ENCODE measurements at regions of chr6 and their contacts with region 1.

Region 1: GRCh38 chr6:99568103-99568933 is at the start of gene CCNC:
- DNase-seq: peak; percentile 96
- ATAC-seq: peak; percentile 97
- H3K4me3 Mint-ChIP-seq: peak within 1 kb of the TSS; percentile 94
- H3K27ac Mint-ChIP-seq: peak within 1 kb of the TSS; percentile 99
- H3K4me1 Mint-ChIP-seq: peaks cover 16% of the 10 kb centered on the region
- H3K27me3 Mint-ChIP-seq: no peaks in the 10 kb centered on the region; the same call in 1 of the 2 replicates
- CTCF ChIP-seq: no peak
- total RNA-seq, gene CCNC: 82.2 to 93.1 TPM (median 86.8 TPM) in 3 replicates

Region 2: GRCh38 chr6:99425647-99426453 is 142.5 kb before region 1 on chr6:
- CTCF ChIA-PET with region 1: no interaction called
- POLR2A ChIA-PET with region 1: interaction called, 11 read pairs
- DNase-seq: peak; percentile 93
- ATAC-seq: peak; percentile 80
- H3K4me3 Mint-ChIP-seq: peak overlapping the region; percentile 97
- H3K27ac Mint-ChIP-seq: peak overlapping the region; percentile 100
- H3K4me1 Mint-ChIP-seq: peaks cover 72% of the 10 kb centered on the region
- H3K27me3 Mint-ChIP-seq: no peaks in the 10 kb centered on the region; the same call in 1 of the 2 replicates
- CTCF ChIP-seq: no peak

Region 3: DNA sequence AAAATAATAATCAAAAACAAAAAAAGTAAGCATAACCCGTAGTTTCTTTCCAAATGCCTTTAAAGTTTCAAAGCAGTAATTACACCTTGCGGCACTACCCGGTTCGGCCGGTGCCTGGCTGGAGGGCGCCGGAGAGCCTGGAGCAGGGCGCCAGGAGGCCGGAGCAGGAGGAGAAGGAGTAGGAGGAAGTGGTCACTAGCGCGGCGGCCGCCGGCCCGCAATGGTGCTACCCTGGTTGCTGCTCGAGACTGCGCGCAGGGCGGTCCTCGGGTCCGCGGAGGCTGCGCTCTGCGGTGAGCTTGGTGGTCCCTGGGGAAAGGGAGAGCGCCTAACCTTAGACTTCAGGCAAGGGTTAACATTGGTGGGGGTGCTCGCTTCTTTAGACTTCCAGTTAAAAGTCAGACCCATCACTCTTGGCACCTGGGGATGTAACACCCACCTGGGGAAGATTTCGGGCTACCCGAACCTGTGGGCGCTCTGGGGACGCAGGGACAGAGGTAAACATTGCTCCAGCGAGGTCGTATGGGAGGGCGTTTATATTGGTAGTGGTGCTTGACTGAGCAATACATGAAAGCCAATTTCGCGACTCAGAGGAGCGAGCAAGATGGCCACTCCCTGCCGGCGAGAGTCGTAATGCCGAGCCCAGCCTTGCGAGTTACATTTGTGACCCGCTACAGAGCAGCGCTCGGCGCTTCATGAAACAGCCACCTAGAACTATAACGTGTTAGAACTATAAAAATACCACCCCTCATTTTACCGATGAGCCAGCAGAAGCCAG is 47.3 kb before region 1 on chr6:
- CTCF ChIA-PET with region 1: interaction called, 7 read pairs
- POLR2A ChIA-PET with region 1: interaction called, 15 read pairs
- DNase-seq: peak; percentile 87
- ATAC-seq: peak; percentile 97
- H3K4me3 Mint-ChIP-seq: peak overlapping the region; percentile 100
- H3K27ac Mint-ChIP-seq: peak overlapping the region; percentile 99
- H3K4me1 Mint-ChIP-seq: peaks cover 8% of the 10 kb centered on the region
- H3K27me3 Mint-ChIP-seq: no peaks in the 10 kb centered on the region
- CTCF ChIP-seq: peak; percentile 67

Region 4: GRCh38 chr6:99603421-99604165 is 35.3 kb after region 1 on chr6:
- CTCF ChIA-PET with region 1: interaction called, 14 read pairs
- POLR2A ChIA-PET with region 1: interaction called, 5 read pairs
- DNase-seq: peak; percentile 84
- ATAC-seq: peak; percentile 62
- H3K4me3 Mint-ChIP-seq: peak overlapping the region; percentile 62
- H3K27ac Mint-ChIP-seq: no peak overlapping the region
- H3K4me1 Mint-ChIP-seq: peaks cover 51% of the 10 kb centered on the region
- H3K27me3 Mint-ChIP-seq: peaks cover 100% of the 10 kb centered on the region
- CTCF ChIP-seq: no peak